IMR-90 (cell line): ENCODE measurements at regions of chr5 and their contacts with region 1.

Region 1: GRCh38 chr5:120463991-120464626 is at the start of gene PRR16:
- DNase-seq: peak; percentile 73
- ATAC-seq: peak; percentile 90
- H3K4me3 ChIP-seq: peak within 1 kb of the TSS; percentile 94
- H3K27ac ChIP-seq: peak within 1 kb of the TSS; percentile 95
- H3K4me1 ChIP-seq: no peaks in the 10 kb centered on the region
- H3K27me3 ChIP-seq: no peaks in the 10 kb centered on the region
- CTCF ChIP-seq: peak; percentile 42
- POLR2A ChIP-seq: no peak
- RAD21 ChIP-seq: peak; percentile 51
- total RNA-seq, gene PRR16: 9.9 and 10.6 TPM in 2 replicates

Region 2: DNA sequence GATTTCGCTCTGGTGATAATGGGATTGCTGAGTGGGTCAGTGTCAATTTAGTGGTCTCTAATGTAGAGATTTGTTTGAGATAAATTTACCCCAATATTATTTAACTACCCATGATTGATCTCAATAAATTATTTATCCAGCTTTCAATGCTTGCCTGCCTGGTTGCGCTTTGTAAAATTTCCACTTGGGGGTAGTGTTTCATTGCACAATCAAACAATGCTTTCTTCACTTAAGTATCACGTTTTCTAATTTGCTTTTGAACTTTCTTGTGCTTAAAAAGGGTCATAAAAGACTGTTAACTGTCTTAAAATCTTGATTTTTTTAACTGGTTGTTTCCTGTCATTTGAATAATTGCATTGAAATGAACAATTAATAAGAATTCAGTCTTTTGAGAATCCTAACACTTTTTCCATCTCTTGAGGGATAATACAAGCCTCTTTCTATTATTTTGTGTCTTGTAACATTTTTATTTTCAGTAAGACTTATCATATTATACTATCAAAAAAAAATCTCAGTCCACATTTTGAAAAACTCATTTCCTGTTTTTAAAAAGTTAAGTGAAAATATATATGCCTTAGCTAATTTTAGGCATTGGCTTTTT is 993.2 kb before region 1 on chr5:
- CTCF ChIA-PET with region 1: no interaction called
- POLR2A ChIA-PET with region 1: no interaction called
- dilution Hi-C with region 1: no loop called
- in situ Hi-C with region 1: no loop called
- intact Hi-C with region 1: loop called (anchors 10 kb)
- DNase-seq: peak; percentile 51
- ATAC-seq: peak; percentile 48; the same call in 1 of the 2 replicates
- H3K4me3 ChIP-seq: no peak overlapping the region
- H3K27ac ChIP-seq: no peak overlapping the region
- H3K4me1 ChIP-seq: no peaks in the 10 kb centered on the region
- H3K27me3 ChIP-seq: no peaks in the 10 kb centered on the region
- CTCF ChIP-seq: peak; percentile 72
- POLR2A ChIP-seq: no peak
- RAD21 ChIP-seq: peak; percentile 82

Region 3: DNA sequence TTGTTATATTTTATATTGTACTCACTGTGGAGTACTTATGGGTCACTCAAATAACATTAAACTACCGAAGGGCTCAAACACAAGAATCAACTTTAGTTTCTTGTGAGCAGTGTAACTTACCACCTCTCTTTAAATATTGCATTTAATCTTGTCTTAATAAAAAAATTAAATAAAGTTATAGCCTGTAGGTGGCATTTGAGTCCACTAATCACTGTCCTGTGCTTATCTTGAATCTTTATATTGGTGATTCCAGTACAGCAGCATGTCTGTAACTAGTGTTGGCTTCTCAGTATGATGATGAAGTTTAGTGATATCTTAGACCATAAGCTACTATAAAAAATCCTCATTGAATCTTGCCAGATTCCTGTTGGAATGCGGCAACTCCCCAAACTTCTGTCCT is 521.0 kb before region 1 on chr5:
- CTCF ChIA-PET with region 1: no interaction called
- POLR2A ChIA-PET with region 1: no interaction called
- dilution Hi-C with region 1: no loop called
- in situ Hi-C with region 1: no loop called
- intact Hi-C with region 1: loop called (anchors 5 kb)
- DNase-seq: peak; percentile 28
- ATAC-seq: peak; percentile 75
- H3K4me3 ChIP-seq: no peak overlapping the region
- H3K27ac ChIP-seq: no peak overlapping the region
- H3K4me1 ChIP-seq: no peaks in the 10 kb centered on the region
- H3K27me3 ChIP-seq: no peaks in the 10 kb centered on the region
- CTCF ChIP-seq: peak; percentile 50
- POLR2A ChIP-seq: no peak
- RAD21 ChIP-seq: peak; percentile 58

Region 4: DNA sequence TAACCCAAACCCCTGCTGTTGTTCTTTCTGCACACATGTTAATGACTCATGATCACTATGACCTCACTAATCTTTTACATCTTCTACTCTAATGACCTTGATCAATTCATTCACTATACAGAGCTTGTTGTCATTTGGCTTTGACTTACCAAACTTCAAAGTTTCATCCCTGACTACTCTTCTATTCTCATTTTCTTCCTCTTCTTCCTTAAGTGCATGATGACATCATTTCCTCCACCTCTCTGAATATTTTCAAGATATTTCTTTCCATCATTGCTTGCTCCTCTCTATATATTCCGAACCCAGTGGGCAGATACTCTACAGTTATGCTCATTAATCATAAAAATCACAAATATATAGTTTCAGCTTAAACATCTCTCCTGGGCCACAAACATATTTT is 485.9 kb before region 1 on chr5:
- CTCF ChIA-PET with region 1: no interaction called
- POLR2A ChIA-PET with region 1: no interaction called
- dilution Hi-C with region 1: no loop called
- in situ Hi-C with region 1: no loop called
- intact Hi-C with region 1: no loop called
- DNase-seq: no peak
- ATAC-seq: no peak
- H3K4me3 ChIP-seq: no peak overlapping the region
- H3K27ac ChIP-seq: no peak overlapping the region
- H3K4me1 ChIP-seq: no peaks in the 10 kb centered on the region
- H3K27me3 ChIP-seq: no peaks in the 10 kb centered on the region
- CTCF ChIP-seq: no peak
- POLR2A ChIP-seq: no peak
- RAD21 ChIP-seq: no peak

Region 5: DNA sequence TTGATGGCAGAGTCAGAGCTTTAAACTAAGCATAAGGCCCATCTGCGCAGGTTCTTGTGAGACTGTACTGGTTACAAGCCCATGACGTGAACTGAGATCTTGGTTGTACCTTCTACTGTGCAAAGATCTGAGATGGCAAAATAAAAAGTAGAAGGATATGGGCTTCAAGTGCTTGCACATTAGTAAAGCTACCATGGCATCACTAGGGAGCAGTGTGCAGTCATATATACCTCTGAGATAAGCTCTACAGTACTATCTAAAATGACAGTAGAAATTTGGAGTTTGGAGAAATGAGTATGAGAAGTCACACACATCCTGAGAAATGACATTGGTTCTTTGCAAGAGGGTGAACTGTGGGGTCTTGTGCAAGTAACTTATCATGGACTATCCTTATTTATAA is 408.3 kb before region 1 on chr5:
- CTCF ChIA-PET with region 1: no interaction called
- POLR2A ChIA-PET with region 1: no interaction called
- dilution Hi-C with region 1: no loop called
- in situ Hi-C with region 1: no loop called
- intact Hi-C with region 1: loop called (anchors 2 kb)
- DNase-seq: peak; percentile 76
- ATAC-seq: peak; percentile 97
- H3K4me3 ChIP-seq: no peak overlapping the region
- H3K27ac ChIP-seq: no peak overlapping the region
- H3K4me1 ChIP-seq: no peaks in the 10 kb centered on the region
- H3K27me3 ChIP-seq: no peaks in the 10 kb centered on the region
- CTCF ChIP-seq: peak; percentile 71
- POLR2A ChIP-seq: no peak
- RAD21 ChIP-seq: peak; percentile 72

Region 6: GRCh38 chr5:120614531-120615180 is 150.5 kb after region 1 on chr5:
- CTCF ChIA-PET with region 1: interaction called, 5 read pairs
- POLR2A ChIA-PET with region 1: no interaction called
- dilution Hi-C with region 1: no loop called
- in situ Hi-C with region 1: no loop called
- intact Hi-C with region 1: loop called (anchors 2 kb)
- DNase-seq: peak; percentile 70
- ATAC-seq: peak; percentile 65
- H3K4me3 ChIP-seq: no peak overlapping the region
- H3K27ac ChIP-seq: peak overlapping the region; percentile 57; the same call in 1 of the 2 replicates
- H3K4me1 ChIP-seq: peaks cover 10% of the 10 kb centered on the region
- H3K27me3 ChIP-seq: no peaks in the 10 kb centered on the region
- CTCF ChIP-seq: no peak
- POLR2A ChIP-seq: no peak
- RAD21 ChIP-seq: no peak

Region 7: DNA sequence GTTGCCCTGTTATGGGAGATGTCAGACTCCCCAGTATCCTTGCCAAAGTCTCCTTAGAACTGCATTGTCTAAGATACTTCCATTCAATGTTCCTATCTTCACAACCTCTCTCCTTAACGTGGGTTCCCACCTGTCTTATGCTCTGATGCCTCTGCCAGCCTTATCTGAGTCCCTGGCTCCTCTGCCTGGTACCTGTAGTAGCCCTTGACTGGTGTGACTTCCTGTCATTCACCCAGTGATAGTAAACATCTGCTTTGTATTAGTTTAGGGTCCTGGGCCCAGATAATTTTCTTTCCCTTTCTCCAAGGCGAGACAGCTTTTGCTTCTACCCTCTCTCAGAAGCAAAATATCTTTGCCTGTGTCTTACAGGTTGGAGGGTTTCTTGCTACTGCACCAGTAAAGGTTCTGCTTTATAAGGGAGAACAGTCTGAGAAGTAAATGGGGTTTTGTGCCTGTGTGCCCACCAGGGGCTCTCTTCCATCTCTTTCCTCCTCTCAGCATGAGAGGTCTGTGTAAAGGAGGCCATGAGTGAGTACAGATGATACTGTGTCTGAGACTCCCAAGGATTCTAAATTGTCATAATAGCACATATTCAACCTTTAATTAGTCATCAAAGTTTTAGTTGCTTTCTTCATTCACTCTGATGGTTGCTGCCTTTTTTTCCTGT is 220.8 kb after region 1 on chr5:
- CTCF ChIA-PET with region 1: no interaction called
- POLR2A ChIA-PET with region 1: no interaction called
- dilution Hi-C with region 1: no loop called
- in situ Hi-C with region 1: no loop called
- intact Hi-C with region 1: loop called (anchors 2 kb)
- DNase-seq: peak; percentile 12
- ATAC-seq: peak; percentile 46; the same call in 1 of the 2 replicates
- H3K4me3 ChIP-seq: no peak overlapping the region
- H3K27ac ChIP-seq: no peak overlapping the region
- H3K4me1 ChIP-seq: peaks cover 5% of the 10 kb centered on the region; the same call in 1 of the 2 replicates
- H3K27me3 ChIP-seq: no peaks in the 10 kb centered on the region
- CTCF ChIP-seq: peak; percentile 26; the same call in 1 of the 2 replicates
- POLR2A ChIP-seq: no peak
- RAD21 ChIP-seq: no peak